Posterior vena cava (tissue), 2 donors: ENCODE measurements at regions of chr13 and their contacts with region 1.

Region 1: DNA sequence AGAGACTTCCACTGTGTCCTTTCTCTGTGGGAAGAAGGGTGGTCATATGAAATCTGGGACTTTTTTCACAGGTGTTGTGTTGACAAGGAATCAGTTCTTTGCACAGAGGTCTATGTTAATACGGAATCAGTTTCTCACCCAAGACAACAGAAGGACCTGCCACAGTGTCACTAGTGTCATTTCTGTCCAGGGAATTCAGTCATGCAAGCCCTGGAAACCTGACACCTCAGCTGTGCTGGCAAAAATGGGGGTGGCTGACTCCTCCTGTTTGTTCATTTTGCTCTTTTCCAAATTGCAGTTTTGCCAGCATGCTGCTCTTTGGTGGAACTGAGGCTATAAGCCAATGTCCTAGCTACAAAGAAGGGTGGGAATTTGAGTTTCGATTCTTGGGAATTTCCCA is 49.8 kb upstream of the ESD start:
- DNase-seq: no peak

Region 2: DNA sequence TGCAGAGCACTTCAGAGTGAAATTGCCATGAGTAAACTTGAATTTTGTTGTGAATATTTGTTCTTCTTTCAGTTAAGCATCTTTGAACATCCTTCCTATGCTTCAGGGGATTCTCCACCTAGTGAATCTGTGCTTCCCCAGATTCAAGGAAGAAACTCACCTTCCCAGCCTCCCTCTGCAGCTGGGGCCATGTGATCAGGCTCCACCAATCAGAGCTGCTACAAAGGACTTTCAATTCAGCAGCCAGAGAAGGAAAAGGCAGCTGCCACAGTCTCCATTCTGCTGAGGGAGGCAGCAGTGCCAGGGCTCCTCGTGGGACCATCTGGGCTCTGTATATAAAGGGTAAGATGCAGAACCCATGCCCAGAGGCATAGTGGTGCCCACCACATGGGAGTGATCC is 905.5 kb before region 1 on chr13:
- intact Hi-C with region 1: loop called in 1 of 2 experiments (anchors 5 kb)
- DNase-seq: no peak

Region 3: GRCh38 chr13:46553886-46554858 is 292.6 kb before region 1 on chr13:
- intact Hi-C with region 1: no loop called
- DNase-seq: peak; percentile 93